ENCODE measurements at regions of chr11 and their contacts with region 1.

Region 1: GRCh38 chr11:62831520-62832335 is at the start of gene STX5:
- DNase-seq: peak; percentile 99 to 100 (median 100)
- H3K4me3 ChIP-seq: peak within 1 kb of the TSS; percentile 82 to 85
- H3K4me3 Mint-ChIP-seq: peak within 1 kb of the TSS; percentile 94 to 100 (median 98)
- H3K27ac ChIP-seq: peak within 1 kb of the TSS; percentile 97
- H3K27ac Mint-ChIP-seq: peak within 1 kb of the TSS; percentile 94 to 100 (median 99)
- H3K4me1 ChIP-seq: peaks cover 30% of the 10 kb centered on the region
- H3K4me1 Mint-ChIP-seq: peaks cover 21 to 59% (median 41%) of the 10 kb centered on the region in 4 donors
- H3K27me3 ChIP-seq: no peaks in the 10 kb centered on the region
- H3K27me3 Mint-ChIP-seq: no peaks in the 10 kb centered on the region
- total RNA-seq, gene STX5: 66.0 to 67.9 TPM

Region 2: GRCh38 chr11:62545437-62546243 is 286.1 kb before region 1 on chr11:
- CTCF ChIA-PET with region 1: no interaction called
- POLR2A ChIA-PET with region 1: no interaction called
- intact Hi-C with region 1: no loop called
- DNase-seq: peak; percentile 53 to 82 (median 54)
- H3K4me3 ChIP-seq: peak overlapping the region; percentile 91 to 94
- H3K4me3 Mint-ChIP-seq: peak overlapping the region; percentile 97 to 99 (median 98)
- H3K27ac ChIP-seq: peak overlapping the region; percentile 97
- H3K27ac Mint-ChIP-seq: peak overlapping the region; percentile 97 to 99 (median 98)
- H3K4me1 ChIP-seq: peaks cover 70% of the 10 kb centered on the region
- H3K4me1 Mint-ChIP-seq: peaks cover 43 to 85% (median 60%) of the 10 kb centered on the region in 4 donors
- H3K27me3 ChIP-seq: no peaks in the 10 kb centered on the region
- H3K27me3 Mint-ChIP-seq: no peaks in the 10 kb centered on the region

Region 3: DNA sequence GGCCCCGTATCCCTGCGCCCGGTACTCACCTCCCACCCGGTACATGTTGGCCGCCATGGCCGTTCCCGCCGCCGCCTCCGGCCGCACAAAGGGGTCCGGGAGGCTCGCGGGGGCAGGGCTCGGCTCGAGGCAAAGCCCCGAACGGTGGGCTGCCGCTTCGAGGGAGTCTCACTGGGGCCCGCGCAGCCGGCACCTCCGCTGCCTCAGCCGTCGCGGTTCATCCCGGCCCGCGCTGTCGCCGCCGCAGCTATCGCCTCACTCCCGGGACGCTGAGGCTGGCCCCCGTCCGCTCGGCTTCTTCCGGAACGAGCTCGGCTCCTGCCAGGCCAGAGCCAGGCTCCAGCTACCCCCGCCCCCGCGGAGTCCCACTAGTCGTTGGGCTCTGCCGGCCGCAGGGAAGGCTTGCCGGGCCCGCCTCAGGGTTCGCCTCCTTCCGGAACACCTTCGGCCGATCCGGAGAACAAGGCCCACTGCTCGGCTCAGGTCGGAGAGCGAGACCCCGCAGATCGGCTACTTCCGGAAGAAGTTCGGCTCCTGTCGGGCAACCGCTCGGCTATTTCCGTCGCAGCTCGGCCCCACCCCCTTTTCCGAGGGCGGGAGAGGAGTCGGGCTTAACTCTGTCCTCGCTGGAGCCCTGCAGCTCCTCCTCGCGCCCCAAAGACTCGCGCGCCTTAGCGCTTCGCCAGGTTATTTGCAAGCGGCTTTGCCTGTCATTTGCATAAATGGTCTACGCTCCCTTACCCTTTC is 230.2 kb before region 1 on chr11 and contains the start of gene MTA2:
- CTCF ChIA-PET with region 1: no interaction called
- POLR2A ChIA-PET with region 1: interaction called, 4 read pairs
- intact Hi-C with region 1: loop called (anchors 1 kb)
- DNase-seq: peak; percentile 99 to 100 (median 100)
- H3K4me3 ChIP-seq: peak within 1 kb of the TSS; percentile 71 to 82
- H3K4me3 Mint-ChIP-seq: peak within 1 kb of the TSS; percentile 91 to 99 (median 96)
- H3K27ac ChIP-seq: peak within 1 kb of the TSS; percentile 91
- H3K27ac Mint-ChIP-seq: peak within 1 kb of the TSS; percentile 90 to 99 (median 98)
- H3K4me1 ChIP-seq: peaks cover 35% of the 10 kb centered on the region
- H3K4me1 Mint-ChIP-seq: peaks cover 33 to 60% (median 46%) of the 10 kb centered on the region in 4 donors
- H3K27me3 ChIP-seq: no peaks in the 10 kb centered on the region
- H3K27me3 Mint-ChIP-seq: no peaks in the 10 kb centered on the region
- total RNA-seq, gene MTA2: 207 to 210 TPM

Region 4: GRCh38 chr11:62771144-62772021 is 60.3 kb before region 1 on chr11 and contains the start of gene TAF6L:
- CTCF ChIA-PET with region 1: interaction called, 4 read pairs
- POLR2A ChIA-PET with region 1: interaction called, 14 read pairs
- intact Hi-C with region 1: no loop called
- DNase-seq: peak; percentile 86 to 92 (median 88)
- H3K4me3 ChIP-seq: peak within 1 kb of the TSS; percentile 67 to 83
- H3K4me3 Mint-ChIP-seq: peak within 1 kb of the TSS; percentile 87 to 97 (median 92)
- H3K27ac ChIP-seq: peak within 1 kb of the TSS; percentile 82
- H3K27ac Mint-ChIP-seq: peak within 1 kb of the TSS; percentile 92 to 99 (median 97)
- H3K4me1 ChIP-seq: peaks cover 24% of the 10 kb centered on the region
- H3K4me1 Mint-ChIP-seq: peaks cover 14 to 32% (median 22%) of the 10 kb centered on the region in 4 donors
- H3K27me3 ChIP-seq: no peaks in the 10 kb centered on the region
- H3K27me3 Mint-ChIP-seq: no peaks in the 10 kb centered on the region
- total RNA-seq, gene TAF6L: 26.3 to 34.0 TPM

Region 5: GRCh38 chr11:62787005-62787759 is 44.5 kb before region 1 on chr11 and contains the start of gene TMEM179B:
- CTCF ChIA-PET with region 1: interaction called, 11 read pairs
- POLR2A ChIA-PET with region 1: interaction called, 801 read pairs
- intact Hi-C with region 1: loop called (anchors 2 kb)
- DNase-seq: peak; percentile 95 to 99 (median 96)
- H3K4me3 ChIP-seq: peak within 1 kb of the TSS; percentile 73 to 95
- H3K4me3 Mint-ChIP-seq: peak within 1 kb of the TSS; percentile 93 to 97 (median 96)
- H3K27ac ChIP-seq: peak within 1 kb of the TSS; percentile 84
- H3K27ac Mint-ChIP-seq: peak within 1 kb of the TSS; percentile 89 to 98 (median 97)
- H3K4me1 ChIP-seq: peaks cover 45% of the 10 kb centered on the region
- H3K4me1 Mint-ChIP-seq: peaks cover 29 to 61% (median 47%) of the 10 kb centered on the region in 4 donors
- H3K27me3 ChIP-seq: no peaks in the 10 kb centered on the region
- H3K27me3 Mint-ChIP-seq: no peaks in the 10 kb centered on the region
- total RNA-seq, gene TMEM179B: 66.3 to 66.6 TPM

Region 6: DNA sequence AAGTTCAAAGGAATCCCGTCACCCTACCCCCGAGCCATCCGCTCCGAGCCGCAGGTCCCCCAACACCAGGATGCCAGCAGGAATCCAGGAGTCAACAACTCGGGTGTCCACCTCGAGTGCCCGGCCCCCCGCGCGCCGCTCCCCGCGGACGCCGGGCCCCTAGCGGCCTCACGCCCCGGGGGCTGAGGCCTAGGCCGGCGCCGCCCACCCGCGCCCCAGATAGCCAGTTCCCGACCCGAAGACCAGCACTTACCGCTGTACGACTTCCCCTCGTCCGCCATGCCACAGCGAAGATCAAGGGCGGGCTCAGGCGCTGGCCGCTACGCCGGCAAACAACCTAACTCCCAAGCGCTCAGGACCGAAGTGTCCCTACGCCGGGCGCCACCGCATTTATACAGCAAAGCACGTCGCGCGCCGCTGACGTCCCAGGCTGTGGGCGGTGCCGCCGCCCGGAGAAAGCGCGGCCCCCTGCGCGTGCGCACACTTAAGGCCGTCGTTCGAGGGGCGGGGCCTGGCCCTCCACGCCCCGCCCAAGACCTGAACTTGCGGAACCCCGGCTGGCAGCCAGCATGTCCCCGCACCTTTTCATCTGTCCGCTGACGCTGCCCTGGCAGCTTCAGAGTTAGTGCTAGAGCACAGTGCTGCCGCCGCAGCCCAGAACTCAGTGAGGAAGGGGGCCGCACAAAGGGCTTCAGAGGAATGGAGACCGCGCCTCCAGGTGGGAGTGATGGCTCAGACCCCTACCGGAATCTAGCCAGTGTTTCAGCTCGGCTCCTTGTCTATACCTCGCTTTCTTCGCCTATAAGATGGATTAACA is 26.4 kb before region 1 on chr11 and contains the start of gene NXF1:
- CTCF ChIA-PET with region 1: no interaction called
- POLR2A ChIA-PET with region 1: interaction called, 801 read pairs
- intact Hi-C with region 1: loop called (anchors 1 kb)
- DNase-seq: peak; percentile 90 to 98 (median 96)
- H3K4me3 ChIP-seq: peak within 1 kb of the TSS; percentile 87 to 93
- H3K4me3 Mint-ChIP-seq: peak within 1 kb of the TSS; percentile 97 to 100 (median 99)
- H3K27ac ChIP-seq: peak within 1 kb of the TSS; percentile 94
- H3K27ac Mint-ChIP-seq: peak within 1 kb of the TSS; percentile 97 to 100 (median 99)
- H3K4me1 ChIP-seq: peaks cover 22% of the 10 kb centered on the region
- H3K4me1 Mint-ChIP-seq: peaks cover 20 to 43% (median 31%) of the 10 kb centered on the region in 4 donors
- H3K27me3 ChIP-seq: no peaks in the 10 kb centered on the region
- H3K27me3 Mint-ChIP-seq: peaks cover 0 to 2% of the 10 kb centered on the region in 2 donors
- total RNA-seq, gene NXF1: 195 to 196 TPM

Measured in CD4-positive, alpha-beta memory T cell (primary cell).